Psoas muscle (tissue), 8 donors: ENCODE measurements at regions of chr3 and their contacts with region 1.

Region 1: GRCh38 chr3:160885791-160886286 is 129.8 kb downstream of the PPM1L start:
- DNase-seq: peak; percentile 89 to 97
- ATAC-seq: peak; percentile 94 to 97 (median 96)
- H3K4me3 ChIP-seq: peak overlapping the region; percentile 48
- H3K27ac ChIP-seq: peak overlapping the region; percentile 90
- H3K4me1 ChIP-seq: peaks cover 26% of the 10 kb centered on the region
- H3K27me3 ChIP-seq: no peaks in the 10 kb centered on the region
- CTCF ChIP-seq: peak; percentile 44

Region 2: DNA sequence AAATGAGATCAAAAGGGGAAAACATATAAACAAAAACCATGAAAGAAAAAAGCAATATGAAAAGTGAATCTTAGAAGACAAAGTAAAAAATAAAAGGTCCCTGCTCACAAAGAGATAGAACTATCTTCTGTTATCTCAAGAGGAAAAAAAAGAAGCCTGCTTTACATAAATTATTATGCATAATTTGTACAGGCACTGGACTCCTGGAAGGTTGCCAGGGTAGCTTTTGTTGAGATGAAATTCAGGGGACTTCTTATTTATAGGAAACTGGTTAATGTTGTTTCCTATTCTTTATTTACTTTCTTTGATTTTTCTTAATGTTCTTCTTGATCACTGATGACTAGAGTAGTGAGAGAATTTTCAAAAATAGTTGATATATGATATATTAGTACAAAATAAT is 62.9 kb before region 1 on chr3:
- intact Hi-C with region 1: no loop called
- DNase-seq: no peak
- ATAC-seq: no peak
- H3K4me3 ChIP-seq: no peak overlapping the region
- H3K27ac ChIP-seq: no peak overlapping the region
- H3K4me1 ChIP-seq: peaks cover 49% of the 10 kb centered on the region
- H3K27me3 ChIP-seq: no peaks in the 10 kb centered on the region
- CTCF ChIP-seq: no peak

Region 3: DNA sequence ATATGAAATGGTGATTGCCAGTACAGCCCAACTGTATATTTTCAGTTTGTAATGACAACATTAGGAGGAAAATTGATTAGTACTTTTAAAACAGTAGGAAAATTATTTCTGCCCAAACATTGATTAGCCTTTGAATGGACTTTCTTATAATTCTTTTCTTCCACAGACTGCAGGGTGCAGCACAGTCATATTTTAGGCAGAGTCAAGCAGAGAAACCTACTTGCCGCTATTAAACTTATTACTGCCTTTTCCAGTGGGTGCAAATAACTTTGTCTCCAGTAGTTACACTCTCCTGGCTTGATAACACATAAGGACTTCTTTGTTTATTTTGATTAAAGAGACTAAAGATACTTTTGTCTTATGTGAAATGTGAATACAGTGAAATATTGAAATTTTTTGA is 44.4 kb before region 1 on chr3:
- intact Hi-C with region 1: loop called in 1 of 2 experiments (anchors 5 kb)
- DNase-seq: no peak
- ATAC-seq: peak in 3 of 4 donors; percentile 47 to 61 (median 53)
- H3K4me3 ChIP-seq: no peak overlapping the region
- H3K27ac ChIP-seq: peak overlapping the region; percentile 71
- H3K4me1 ChIP-seq: peaks cover 35% of the 10 kb centered on the region
- H3K27me3 ChIP-seq: no peaks in the 10 kb centered on the region
- CTCF ChIP-seq: peak; percentile 18